ENCODE measurements at regions of chr12 and their contacts with region 1.

Region 1: GRCh38 chr12:57803319-57803893 is 15.1 kb downstream of the AVIL start:
- DNase-seq: peak; percentile 31 to 76
- H3K4me3 ChIP-seq: no peak overlapping the region
- H3K27ac ChIP-seq: no peak overlapping the region
- H3K4me1 ChIP-seq: peaks cover 0 to 2% (median under 1%) of the 10 kb centered on the region in 4 experiments; a peak in 1 of 7 replicates
- H3K27me3 ChIP-seq: no peaks in the 10 kb centered on the region
- CTCF ChIP-seq: peak; percentile 73 to 92 (median 78)
- EP300 ChIP-seq: no peak
- POLR2A ChIP-seq: no peak
- RAD21 ChIP-seq: peak; percentile 64 to 72

Region 2: GRCh38 chr12:57759360-57759980 is 43.9 kb before region 1 on chr12:
- CTCF ChIA-PET with region 1: interaction called, 14 read pairs
- POLR2A ChIA-PET with region 1: interaction called, 3 read pairs
- DNase-seq: no peak
- H3K4me3 ChIP-seq: no peak overlapping the region
- H3K27ac ChIP-seq: no peak overlapping the region
- H3K4me1 ChIP-seq: peaks cover 0 to 9% (median 6%) of the 10 kb centered on the region in 4 experiments; a peak in 6 of 7 replicates
- H3K27me3 ChIP-seq: peaks cover 12 to 41% (median 33%) of the 10 kb centered on the region in 4 experiments
- CTCF ChIP-seq: peak; percentile 47 to 66 (median 59)
- EP300 ChIP-seq: no peak
- POLR2A ChIP-seq: no peak
- RAD21 ChIP-seq: peak in 1 of 2 experiments; percentile 7; a peak in 1 of 4 replicates

Region 3: DNA sequence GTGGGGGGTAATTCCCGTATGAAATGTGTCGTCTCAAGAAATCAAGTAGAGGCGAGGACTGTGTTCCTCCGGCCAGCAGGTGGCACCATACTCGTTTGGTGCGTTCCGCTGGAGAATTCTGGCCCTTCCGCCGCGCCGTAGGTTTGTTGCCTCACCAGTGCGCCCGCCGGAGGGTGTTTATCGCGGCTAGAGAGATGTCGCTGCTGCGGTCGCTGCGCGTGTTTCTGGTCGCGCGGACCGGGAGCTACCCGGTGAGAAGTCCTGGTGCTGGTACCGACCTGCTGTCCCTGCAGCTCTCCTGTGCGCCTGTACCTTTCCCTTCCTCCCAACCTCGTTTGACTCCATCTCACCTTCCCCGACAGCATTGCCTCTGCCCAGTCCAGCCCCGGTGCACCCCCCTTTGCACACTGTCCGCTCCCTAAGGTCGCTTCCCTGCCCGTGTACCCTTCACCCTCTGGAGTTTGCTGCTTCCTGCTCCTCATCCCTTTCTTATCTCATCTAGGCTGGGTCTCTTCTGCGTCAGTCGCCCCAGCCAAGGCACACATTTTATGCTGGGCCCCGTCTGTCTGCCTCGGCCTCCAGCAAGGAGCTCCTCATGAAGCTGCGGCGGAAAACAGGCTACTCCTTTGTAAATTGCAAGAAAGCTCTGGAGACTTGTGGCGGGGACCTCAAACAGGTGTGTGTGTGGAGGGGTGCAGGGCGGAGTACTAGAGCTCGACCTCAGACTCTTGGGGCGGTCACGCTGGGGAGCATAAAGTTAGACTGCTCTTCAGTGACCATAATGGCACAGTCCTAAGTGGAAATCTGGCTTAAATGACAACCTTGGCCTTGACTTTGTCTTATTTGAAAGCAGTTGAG is 20.6 kb before region 1 on chr12 and contains the start of gene TSFM:
- CTCF ChIA-PET with region 1: interaction called, 56 read pairs
- POLR2A ChIA-PET with region 1: interaction called, 10 read pairs
- DNase-seq: peak; percentile 77 to 98
- H3K4me3 ChIP-seq: peak within 1 kb of the TSS; percentile 76 to 99 (median 98)
- H3K27ac ChIP-seq: peak within 1 kb of the TSS; percentile 58; the same call in 1 of the 2 replicates
- H3K4me1 ChIP-seq: no peaks in the 10 kb centered on the region
- H3K27me3 ChIP-seq: no peaks in the 10 kb centered on the region
- CTCF ChIP-seq: peak; percentile 85 to 97 (median 96)
- EP300 ChIP-seq: no peak
- POLR2A ChIP-seq: peak in 1 of 2 experiments; percentile 96; a peak in 2 of 3 replicates
- RAD21 ChIP-seq: peak in 1 of 2 experiments; percentile 40; a peak in 1 of 4 replicates
- total RNA-seq, gene TSFM: 47.9 and 49.8 TPM in 2 replicates

Region 4: GRCh38 chr12:57829025-57829777 is 25.8 kb after region 1 on chr12:
- CTCF ChIA-PET with region 1: interaction called, 13 read pairs
- POLR2A ChIA-PET with region 1: interaction called, 3 read pairs
- DNase-seq: no peak
- H3K4me3 ChIP-seq: no peak overlapping the region
- H3K27ac ChIP-seq: no peak overlapping the region; the same call in 1 of the 2 replicates
- H3K4me1 ChIP-seq: peaks cover 7 to 20% (median 9%) of the 10 kb centered on the region in 4 experiments
- H3K27me3 ChIP-seq: no peaks in the 10 kb centered on the region
- CTCF ChIP-seq: no peak
- EP300 ChIP-seq: no peak
- POLR2A ChIP-seq: no peak
- RAD21 ChIP-seq: no peak

Region 5: DNA sequence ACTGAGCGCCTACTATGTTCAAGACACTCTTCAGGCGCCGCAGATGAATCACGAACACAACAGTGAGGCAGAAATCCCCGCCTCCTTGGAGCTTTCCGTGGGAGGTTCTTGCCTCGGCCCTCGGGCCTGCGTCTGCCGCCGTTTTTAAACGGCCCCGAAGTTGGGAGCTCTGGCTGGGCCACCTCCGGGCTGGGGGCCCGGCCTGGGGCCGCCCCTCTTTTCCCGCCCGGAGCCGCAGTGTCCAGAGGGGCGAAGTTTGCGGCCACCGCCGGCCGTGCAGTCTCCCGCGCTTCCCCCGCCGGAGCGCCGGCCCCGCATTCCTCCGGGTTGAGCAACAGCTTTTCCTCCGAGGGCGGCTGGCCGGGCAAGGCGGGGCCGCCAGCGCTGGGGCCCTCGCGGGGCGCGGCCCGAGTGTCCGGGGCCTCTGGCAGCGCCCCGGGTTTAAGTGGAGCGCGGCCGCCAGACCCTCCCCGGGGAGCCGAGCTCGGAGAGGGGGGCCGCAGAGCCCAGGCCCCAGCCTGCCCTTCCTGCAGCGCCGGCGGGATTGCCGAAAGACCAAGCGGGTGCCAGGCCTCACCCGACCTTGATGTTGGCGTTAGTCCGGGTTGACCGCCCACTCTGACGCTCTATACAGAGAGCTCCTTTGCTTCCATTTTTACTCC is 61.8 kb after region 1 on chr12:
- CTCF ChIA-PET with region 1: interaction called, 13 read pairs
- POLR2A ChIA-PET with region 1: no interaction called
- DNase-seq: peak in 1 of 2 experiments; percentile 73
- H3K4me3 ChIP-seq: peak overlapping the region; percentile 25 to 65 (median 41)
- H3K27ac ChIP-seq: no peak overlapping the region
- H3K4me1 ChIP-seq: peaks cover 0 to 12% (median 8%) of the 10 kb centered on the region in 4 experiments; a peak in 5 of 7 replicates
- H3K27me3 ChIP-seq: peaks cover 0 to 20% (median 10%) of the 10 kb centered on the region in 4 experiments; a peak in 5 of 7 replicates
- CTCF ChIP-seq: no peak
- EP300 ChIP-seq: no peak
- POLR2A ChIP-seq: peak in 1 of 2 experiments; percentile 55; a peak in 1 of 3 replicates
- RAD21 ChIP-seq: no peak

Measured in H1 (cell line).